Panc1 (cell line): ENCODE measurements at regions of chr15 and their contacts with region 1.

Region 1: DNA sequence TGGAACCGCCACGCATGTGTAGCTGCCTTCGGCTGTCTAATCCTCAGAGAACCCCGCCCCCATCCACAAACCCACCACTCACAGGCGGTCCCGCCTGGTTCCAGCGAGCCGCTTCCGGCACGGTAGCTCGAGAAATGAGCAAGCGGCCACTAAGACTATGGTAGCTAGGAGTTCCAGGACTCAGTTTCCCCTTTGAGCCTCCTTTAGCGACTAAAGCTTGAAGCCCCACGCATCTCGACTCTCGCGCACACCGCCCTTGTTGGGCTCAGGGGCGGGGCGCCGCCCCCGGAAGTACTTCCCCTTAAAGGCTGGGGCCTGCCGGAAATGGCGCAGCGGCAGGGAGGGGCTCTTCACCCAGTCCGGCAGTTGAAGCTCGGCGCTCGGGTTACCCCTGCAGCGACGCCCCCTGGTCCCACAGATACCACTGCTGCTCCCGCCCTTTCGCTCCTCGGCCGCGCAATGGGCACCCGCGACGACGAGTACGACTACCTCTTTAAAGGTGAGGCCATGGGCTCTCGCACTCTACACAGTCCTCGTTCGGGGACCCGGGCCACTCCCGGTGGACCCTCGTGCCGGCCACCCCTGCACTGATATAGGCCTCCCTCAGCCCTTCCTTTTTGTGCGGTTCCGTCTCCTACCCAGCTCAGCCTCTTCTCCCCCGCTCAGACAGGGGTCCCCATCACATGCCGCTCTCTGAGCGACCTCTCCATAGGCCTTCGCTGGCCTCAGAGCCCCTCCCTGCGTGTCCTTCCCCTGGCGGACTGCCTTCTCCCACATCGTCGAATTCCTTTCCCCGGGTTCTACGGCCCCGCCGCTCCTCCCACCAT is at the start of gene RAB11A:
- DNase-seq: peak; percentile 71
- ATAC-seq: peak; percentile 97
- H3K4me3 ChIP-seq: peak within 1 kb of the TSS; percentile 76 to 98
- H3K27ac ChIP-seq: peak within 1 kb of the TSS; percentile 91
- H3K4me1 ChIP-seq: peaks cover 2% of the 10 kb centered on the region; the same call in 1 of the 2 replicates
- H3K27me3 ChIP-seq: no peaks in the 10 kb centered on the region
- CTCF ChIP-seq: peak; percentile 62; the same call in 1 of the 2 replicates
- total RNA-seq, gene RAB11A: 263 TPM

Region 2: GRCh38 chr15:65762914-65763787 is 106.2 kb before region 1 on chr15:
- CTCF ChIA-PET with region 1: no interaction called
- POLR2A ChIA-PET with region 1: interaction called, 20 read pairs
- in situ Hi-C with region 1: no loop called
- intact Hi-C with region 1: no loop called
- DNase-seq: no peak
- ATAC-seq: no peak
- H3K4me3 ChIP-seq: no peak overlapping the region
- H3K27ac ChIP-seq: no peak overlapping the region
- H3K4me1 ChIP-seq: no peaks in the 10 kb centered on the region; the same call in 1 of the 2 replicates
- H3K27me3 ChIP-seq: no peaks in the 10 kb centered on the region
- CTCF ChIP-seq: no peak

Region 3: DNA sequence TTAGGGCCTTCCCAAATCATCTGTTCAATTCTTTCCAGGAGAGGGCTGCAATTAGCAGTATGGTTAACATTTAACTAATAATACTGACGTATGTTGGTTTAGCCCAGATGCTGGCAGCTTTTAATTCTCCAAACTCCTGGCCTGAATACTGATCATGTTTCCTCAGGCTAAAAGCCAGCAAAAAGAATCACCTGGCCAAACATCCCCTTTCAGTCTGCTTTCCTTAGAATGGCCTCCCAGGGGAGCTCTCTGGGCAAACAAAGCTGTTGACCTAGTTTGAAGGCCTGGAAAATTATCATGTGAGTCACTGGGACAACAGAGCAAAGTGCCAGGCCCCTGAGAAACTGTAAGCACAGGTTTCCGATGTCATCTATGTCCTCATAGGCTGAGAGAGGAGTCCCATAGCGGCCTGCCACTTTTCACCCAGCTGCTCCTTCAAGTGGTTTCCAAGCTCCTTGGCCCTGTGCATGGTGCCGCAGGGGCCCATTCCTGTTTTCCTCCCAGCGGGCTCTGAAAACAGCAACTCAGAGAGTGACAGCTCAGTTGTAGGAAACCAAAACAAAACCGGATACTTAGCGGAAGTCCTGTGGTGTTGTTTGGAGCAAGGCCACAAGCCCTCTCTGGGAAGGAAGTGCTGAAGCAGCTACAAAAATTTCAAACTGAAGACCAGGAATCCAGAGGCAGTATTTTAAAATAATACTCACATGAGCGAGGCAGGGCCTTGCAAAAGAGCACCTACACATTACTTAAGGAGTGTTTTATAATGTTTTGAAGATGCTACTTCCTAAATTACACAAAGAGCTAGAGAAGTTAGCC is 36.6 kb before region 1 on chr15:
- CTCF ChIA-PET with region 1: interaction called, 10 read pairs
- POLR2A ChIA-PET with region 1: interaction called, 6 read pairs
- in situ Hi-C with region 1: no loop called
- intact Hi-C with region 1: no loop called
- DNase-seq: peak; percentile 96
- ATAC-seq: peak; percentile 98
- H3K4me3 ChIP-seq: peak overlapping the region; percentile 14 to 31
- H3K27ac ChIP-seq: peak overlapping the region; percentile 72
- H3K4me1 ChIP-seq: peaks cover 19% of the 10 kb centered on the region
- H3K27me3 ChIP-seq: no peaks in the 10 kb centered on the region
- CTCF ChIP-seq: peak; percentile 48

Region 4: GRCh38 chr15:65896236-65896635 is 26.9 kb after region 1 on chr15:
- CTCF ChIA-PET with region 1: no interaction called
- POLR2A ChIA-PET with region 1: no interaction called
- in situ Hi-C with region 1: no loop called
- intact Hi-C with region 1: no loop called
- DNase-seq: no peak
- ATAC-seq: no peak
- H3K4me3 ChIP-seq: no peak overlapping the region
- H3K27ac ChIP-seq: no peak overlapping the region
- H3K4me1 ChIP-seq: no peaks in the 10 kb centered on the region
- H3K27me3 ChIP-seq: no peaks in the 10 kb centered on the region
- CTCF ChIP-seq: no peak

Region 5: DNA sequence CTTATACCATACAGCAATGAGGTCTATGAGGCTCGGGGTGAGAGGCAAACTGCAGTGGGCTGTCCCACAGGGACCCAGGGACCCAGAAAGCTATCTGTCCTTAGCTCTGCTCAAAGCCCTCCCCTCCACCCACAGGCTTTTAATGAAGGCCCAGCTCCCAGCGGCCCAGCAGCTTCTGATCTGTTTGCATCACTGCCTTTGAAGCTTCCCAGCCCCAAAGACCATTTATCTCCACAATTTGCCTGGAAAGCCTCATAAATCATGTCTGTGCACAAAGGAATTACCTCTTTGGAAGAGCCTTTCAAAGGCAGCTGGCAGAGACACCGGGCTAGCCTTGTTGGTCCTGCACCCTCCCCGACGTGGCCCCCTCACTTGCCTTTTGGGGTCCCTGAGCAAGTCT is 123.9 kb after region 1 on chr15:
- CTCF ChIA-PET with region 1: no interaction called
- POLR2A ChIA-PET with region 1: no interaction called
- in situ Hi-C with region 1: no loop called
- intact Hi-C with region 1: no loop called
- DNase-seq: no peak
- ATAC-seq: no peak
- H3K4me3 ChIP-seq: no peak overlapping the region
- H3K27ac ChIP-seq: no peak overlapping the region
- H3K4me1 ChIP-seq: no peaks in the 10 kb centered on the region
- H3K27me3 ChIP-seq: peaks cover 10% of the 10 kb centered on the region
- CTCF ChIP-seq: no peak